Naive thymus-derived CD4-positive, alpha-beta T cell (primary cell): ENCODE measurements at regions of chr15 and their contacts with region 1.

Region 1: GRCh38 chr15:64093627-64094417 is at the start of gene CIAO2A:
- DNase-seq: peak; percentile 66 to 93 (median 87)
- ATAC-seq: peak; percentile 80
- H3K4me3 ChIP-seq: peak within 1 kb of the TSS; percentile 87
- H3K4me3 Mint-ChIP-seq: peak within 1 kb of the TSS; percentile 92 to 100 (median 98)
- H3K27ac ChIP-seq: peak within 1 kb of the TSS; percentile 88
- H3K27ac Mint-ChIP-seq: peak within 1 kb of the TSS; percentile 98 to 100 (median 99)
- H3K4me1 ChIP-seq: peaks cover 41 to 48% of the 10 kb centered on the region in 2 donors
- H3K4me1 Mint-ChIP-seq: peaks cover 50 to 86% (median 81%) of the 10 kb centered on the region in 7 donors
- H3K27me3 ChIP-seq: no peaks in the 10 kb centered on the region
- H3K27me3 Mint-ChIP-seq: no peaks in the 10 kb centered on the region
- total RNA-seq, gene CIAO2A: 19.2 to 66.8 (median 28.0) TPM

Region 2: DNA sequence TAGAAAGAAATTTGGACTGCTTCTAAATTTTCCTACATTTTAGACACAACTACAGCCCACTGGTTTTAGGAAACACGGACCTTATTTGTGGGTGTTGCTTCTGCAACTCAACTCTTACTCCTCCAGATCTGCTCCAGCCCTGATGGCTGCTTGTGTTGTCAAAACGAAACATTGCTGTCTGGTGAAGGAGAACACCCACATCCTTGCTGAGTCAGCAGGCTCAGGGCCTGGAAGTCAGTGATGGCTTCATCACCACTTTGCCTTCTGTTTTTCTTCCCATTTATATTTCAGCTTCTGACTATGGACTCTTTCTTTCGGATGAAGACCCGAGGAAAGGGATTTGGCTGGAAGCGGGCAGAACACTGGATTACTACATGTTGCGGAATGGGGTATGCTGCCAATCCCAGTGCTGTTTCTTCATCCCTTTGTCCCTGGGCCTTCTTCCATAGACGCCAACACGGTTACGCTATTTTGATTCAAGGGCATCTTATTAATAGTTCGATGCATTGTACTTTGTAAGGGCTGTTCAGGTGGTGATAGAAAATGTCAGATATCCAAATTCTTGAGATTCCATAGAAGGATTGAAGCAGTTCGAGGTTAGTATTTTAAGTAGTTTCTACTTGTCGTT is 1443.9 kb before region 1 on chr15:
- CTCF ChIA-PET with region 1: no interaction called
- POLR2A ChIA-PET with region 1: no interaction called
- intact Hi-C with region 1: no loop called
- DNase-seq: peak in 1 of 9 donors; percentile 26
- ATAC-seq: no peak
- H3K4me3 ChIP-seq: no peak overlapping the region
- H3K4me3 Mint-ChIP-seq: no peak overlapping the region
- H3K27ac ChIP-seq: no peak overlapping the region
- H3K27ac Mint-ChIP-seq: no peak overlapping the region
- H3K4me1 ChIP-seq: no peaks in the 10 kb centered on the region
- H3K4me1 Mint-ChIP-seq: peaks cover 0 to 1% (median 0%) of the 10 kb centered on the region in 7 donors
- H3K27me3 ChIP-seq: no peaks in the 10 kb centered on the region
- H3K27me3 Mint-ChIP-seq: peaks cover 0 to 10% (median 0%) of the 10 kb centered on the region in 5 donors

Region 3: GRCh38 chr15:63048115-63048775 is 1045.6 kb before region 1 on chr15:
- CTCF ChIA-PET with region 1: no interaction called
- POLR2A ChIA-PET with region 1: no interaction called
- intact Hi-C with region 1: loop called in 1 of 2 experiments (anchors 10 kb)
- DNase-seq: peak; percentile 72 to 90 (median 85)
- ATAC-seq: peak; percentile 92
- H3K4me3 ChIP-seq: peak overlapping the region; percentile 76
- H3K4me3 Mint-ChIP-seq: peak overlapping the region; percentile 84 to 97 (median 94)
- H3K27ac ChIP-seq: peak overlapping the region; percentile 59
- H3K27ac Mint-ChIP-seq: peak overlapping the region; percentile 25 to 85 (median 68)
- H3K4me1 ChIP-seq: peaks cover 7 to 16% of the 10 kb centered on the region in 2 donors
- H3K4me1 Mint-ChIP-seq: peaks cover 13 to 42% (median 26%) of the 10 kb centered on the region in 7 donors
- H3K27me3 ChIP-seq: peaks cover 17 to 27% of the 10 kb centered on the region in 2 donors
- H3K27me3 Mint-ChIP-seq: peaks cover 30 to 60% (median 36%) of the 10 kb centered on the region in 5 donors

Region 4: GRCh38 chr15:63473999-63474809 is 619.6 kb before region 1 on chr15:
- CTCF ChIA-PET with region 1: interaction called, 5 read pairs
- POLR2A ChIA-PET with region 1: no interaction called
- intact Hi-C with region 1: loop called in 1 of 2 experiments (anchors 1 kb)
- DNase-seq: peak in 5 of 9 donors; percentile 36 to 76 (median 51)
- ATAC-seq: peak; percentile 86
- H3K4me3 ChIP-seq: no peak overlapping the region
- H3K4me3 Mint-ChIP-seq: peak overlapping the region in 8 of 10 donors; percentile 44 to 75 (median 65)
- H3K27ac ChIP-seq: peak overlapping the region; percentile 50
- H3K27ac Mint-ChIP-seq: peak overlapping the region; percentile 86 to 98 (median 94)
- H3K4me1 ChIP-seq: peaks cover 11 to 44% of the 10 kb centered on the region in 2 donors
- H3K4me1 Mint-ChIP-seq: peaks cover 32 to 70% (median 61%) of the 10 kb centered on the region in 7 donors
- H3K27me3 ChIP-seq: no peaks in the 10 kb centered on the region
- H3K27me3 Mint-ChIP-seq: no peaks in the 10 kb centered on the region

Region 5: DNA sequence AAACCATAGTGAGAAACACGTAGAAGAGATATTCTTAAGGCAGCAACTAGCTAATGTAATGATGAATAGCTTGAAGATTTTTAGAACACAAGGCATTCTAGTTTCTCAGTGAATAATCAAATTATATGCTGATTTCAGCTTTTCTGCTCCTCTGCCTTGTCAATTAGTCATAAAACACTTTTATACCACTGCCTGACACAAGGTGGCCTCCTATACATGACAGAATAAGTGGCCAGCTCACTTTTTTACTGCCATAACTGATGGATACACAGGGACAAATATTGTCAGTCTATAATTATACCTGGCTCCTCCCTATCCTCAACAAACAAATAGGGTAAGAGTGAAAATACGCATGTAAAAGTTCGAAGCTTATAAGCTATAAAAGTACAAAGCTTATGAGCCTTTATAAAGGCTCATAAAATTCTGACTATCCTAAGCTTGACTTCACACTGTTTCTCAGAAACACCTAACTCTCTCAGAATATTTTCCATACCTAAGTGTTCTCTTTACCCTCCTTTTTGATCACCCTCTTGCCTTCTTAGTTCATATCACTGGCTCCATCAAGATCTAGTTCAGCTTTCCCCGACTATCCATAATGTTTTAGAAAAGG is 341.6 kb before region 1 on chr15:
- CTCF ChIA-PET with region 1: interaction called, 8 read pairs
- POLR2A ChIA-PET with region 1: interaction called, 4 read pairs
- intact Hi-C with region 1: loop called in 1 of 2 experiments (anchors 1 kb)
- DNase-seq: peak in 7 of 9 donors; percentile 39 to 70 (median 59)
- ATAC-seq: peak; percentile 93
- H3K4me3 ChIP-seq: no peak overlapping the region
- H3K4me3 Mint-ChIP-seq: no peak overlapping the region
- H3K27ac ChIP-seq: no peak overlapping the region
- H3K27ac Mint-ChIP-seq: peak overlapping the region in 7 of 9 donors; percentile 5 to 83 (median 63)
- H3K4me1 ChIP-seq: no peaks in the 10 kb centered on the region
- H3K4me1 Mint-ChIP-seq: peaks cover 0 to 9% (median 2%) of the 10 kb centered on the region in 7 donors
- H3K27me3 ChIP-seq: no peaks in the 10 kb centered on the region
- H3K27me3 Mint-ChIP-seq: no peaks in the 10 kb centered on the region

Region 6: DNA sequence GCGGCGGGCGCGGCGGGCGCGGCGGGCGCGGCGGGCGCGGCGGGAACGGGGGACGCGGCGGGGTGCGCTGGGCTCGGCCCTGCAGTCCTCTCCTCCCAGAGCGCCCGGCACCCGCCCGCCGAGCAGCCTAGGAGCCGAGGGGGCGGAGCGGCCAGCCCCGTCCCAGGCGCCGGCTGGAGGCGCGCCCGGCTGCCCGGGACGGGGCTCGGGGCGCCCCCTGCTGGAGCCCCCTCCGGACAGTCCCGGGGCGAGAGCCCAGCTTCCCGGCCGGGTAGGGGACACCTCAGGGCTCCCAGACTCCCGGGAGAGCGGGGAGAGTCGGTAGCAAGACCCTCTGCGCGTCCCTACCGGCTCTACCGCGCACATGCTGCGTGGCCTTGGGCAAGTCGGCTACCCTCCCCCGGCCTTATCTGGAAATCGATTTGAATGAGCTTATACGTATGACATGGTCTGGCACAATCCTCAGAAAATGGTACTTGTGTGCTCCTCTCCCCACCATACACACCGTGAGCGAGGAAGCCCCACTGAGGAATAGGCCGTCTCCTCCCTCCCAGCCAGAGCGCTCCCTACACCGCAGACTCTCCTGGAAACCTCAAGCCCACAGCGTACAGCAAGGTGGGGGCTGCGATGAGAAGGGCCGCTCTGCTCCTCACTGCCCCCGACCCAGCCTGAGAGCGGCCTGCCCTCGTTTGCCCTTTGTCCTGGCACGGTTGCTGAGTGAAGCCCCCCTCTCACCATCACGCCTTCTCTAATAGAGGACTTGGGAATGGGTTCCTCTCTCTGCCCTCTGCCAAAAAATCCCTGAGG is 47.3 kb before region 1 on chr15 and contains the start of gene DAPK2:
- CTCF ChIA-PET with region 1: no interaction called
- POLR2A ChIA-PET with region 1: no interaction called
- intact Hi-C with region 1: no loop called
- DNase-seq: peak; percentile 29 to 83 (median 63)
- ATAC-seq: peak; percentile 91
- H3K4me3 ChIP-seq: peak within 1 kb of the TSS; percentile 55
- H3K4me3 Mint-ChIP-seq: peak within 1 kb of the TSS; percentile 74 to 85 (median 82)
- H3K27ac ChIP-seq: no peak within 1 kb of the TSS
- H3K27ac Mint-ChIP-seq: peak within 1 kb of the TSS in 5 of 9 donors; percentile 28 to 88 (median 61)
- H3K4me1 ChIP-seq: peaks cover 0 to 5% of the 10 kb centered on the region in 2 donors
- H3K4me1 Mint-ChIP-seq: peaks cover 5 to 30% (median 10%) of the 10 kb centered on the region in 7 donors
- H3K27me3 ChIP-seq: no peaks in the 10 kb centered on the region
- H3K27me3 Mint-ChIP-seq: peaks cover 4 to 41% (median 13%) of the 10 kb centered on the region in 5 donors
- total RNA-seq, gene DAPK2: 0.46 to 9.3 (median 4.2) TPM in 4 of 5 experiments, not detected in the other

Region 7: DNA sequence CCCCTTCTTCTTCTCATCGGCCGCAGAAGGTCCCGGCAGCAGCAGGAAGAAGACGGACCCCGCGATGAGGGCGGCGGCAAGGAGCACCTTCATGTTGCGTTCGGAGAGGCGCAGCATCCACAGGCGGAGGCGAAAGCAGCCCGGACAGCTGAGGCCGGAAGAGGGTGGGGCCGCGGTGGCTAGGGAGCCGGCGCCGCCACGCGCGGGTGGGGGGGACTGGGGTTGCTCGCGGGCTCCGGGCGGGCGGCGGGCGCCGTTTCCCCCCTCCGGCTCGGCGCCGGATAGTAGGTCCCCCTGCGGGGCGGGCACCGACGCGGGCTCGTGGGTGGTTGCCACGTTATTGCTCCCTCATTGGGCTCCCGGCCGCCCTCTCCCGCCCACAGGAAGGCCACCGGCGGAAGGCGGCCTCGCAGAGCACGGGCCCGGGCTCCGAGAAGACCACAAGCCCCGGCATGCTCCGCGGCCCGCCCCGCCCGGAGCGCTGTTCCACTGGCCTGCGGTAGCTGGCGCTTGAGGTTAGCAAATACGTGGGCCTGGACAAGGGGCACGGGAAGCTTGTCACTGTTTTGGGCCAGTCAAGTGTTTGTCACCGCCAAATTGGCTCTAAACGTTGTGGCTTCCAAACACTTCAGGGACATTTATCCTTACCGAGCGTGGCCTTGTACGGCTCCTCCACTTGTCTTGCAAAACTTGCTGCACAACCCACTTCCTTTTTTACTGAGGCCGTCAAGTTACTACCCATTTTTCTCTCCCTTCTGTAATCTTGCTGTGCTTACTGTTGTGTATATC is 69.2 kb after region 1 on chr15 and contains the start of gene PPIB:
- CTCF ChIA-PET with region 1: interaction called, 5 read pairs
- POLR2A ChIA-PET with region 1: interaction called, 12 read pairs
- intact Hi-C with region 1: loop called (anchors 1 kb)
- DNase-seq: peak; percentile 89 to 98 (median 96)
- ATAC-seq: peak; percentile 97
- H3K4me3 ChIP-seq: peak within 1 kb of the TSS; percentile 76
- H3K4me3 Mint-ChIP-seq: peak within 1 kb of the TSS; percentile 80 to 97 (median 90)
- H3K27ac ChIP-seq: peak within 1 kb of the TSS; percentile 97
- H3K27ac Mint-ChIP-seq: peak within 1 kb of the TSS; percentile 83 to 97 (median 93)
- H3K4me1 ChIP-seq: peaks cover 17 to 29% of the 10 kb centered on the region in 2 donors
- H3K4me1 Mint-ChIP-seq: peaks cover 30 to 51% (median 46%) of the 10 kb centered on the region in 7 donors
- H3K27me3 ChIP-seq: no peaks in the 10 kb centered on the region
- H3K27me3 Mint-ChIP-seq: peaks cover 0 to 2% (median 0%) of the 10 kb centered on the region in 5 donors
- total RNA-seq, gene PPIB: 160 to 530 (median 184) TPM

Region 8: DNA sequence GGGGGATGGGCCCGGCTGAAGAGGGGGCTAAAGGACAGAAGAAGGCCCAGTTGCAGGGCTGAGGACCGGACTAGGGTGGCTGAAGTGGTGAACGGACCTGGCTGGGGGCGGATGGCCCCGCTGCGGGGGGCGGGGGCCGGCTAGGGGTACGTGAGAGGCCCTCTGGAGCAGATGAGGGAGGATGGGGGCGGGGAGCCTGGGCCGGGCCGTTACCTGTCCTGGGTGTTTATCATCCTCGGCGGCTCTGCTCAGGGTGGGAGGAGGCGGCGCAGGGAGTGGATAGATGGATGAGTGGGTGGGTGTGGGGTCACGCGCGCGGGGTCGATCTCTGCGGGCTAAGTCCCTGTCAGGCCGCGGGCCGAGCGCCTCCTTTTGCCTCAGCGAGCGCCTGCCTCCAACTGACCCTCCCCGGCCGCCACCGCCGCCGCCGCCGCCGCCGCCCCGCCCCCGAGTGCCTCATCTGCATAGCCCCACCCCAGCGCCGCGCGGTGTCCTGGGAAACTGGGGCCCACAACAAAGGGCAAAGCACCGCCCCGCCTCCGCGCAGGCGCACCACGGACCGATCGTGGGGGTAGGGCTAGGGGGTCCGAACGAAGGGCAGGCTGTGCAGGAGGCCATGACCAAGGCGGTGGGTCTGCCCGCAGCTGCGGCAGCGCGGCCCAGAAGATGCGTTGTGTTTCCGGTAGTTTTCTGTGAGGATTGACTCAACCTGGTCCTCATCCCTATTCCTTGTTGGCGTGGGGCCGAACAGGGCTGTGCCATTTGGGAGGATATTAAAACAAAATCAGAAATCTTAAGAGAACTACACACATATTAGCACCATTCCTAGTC is 609.2 kb after region 1 on chr15:
- CTCF ChIA-PET with region 1: no interaction called
- POLR2A ChIA-PET with region 1: no interaction called
- intact Hi-C with region 1: loop called in 1 of 2 experiments (anchors 1 kb)
- DNase-seq: peak; percentile 87 to 98 (median 92)
- ATAC-seq: peak; percentile 98
- H3K4me3 ChIP-seq: peak overlapping the region; percentile 93
- H3K4me3 Mint-ChIP-seq: peak overlapping the region; percentile 78 to 97 (median 84)
- H3K27ac ChIP-seq: peak overlapping the region; percentile 80
- H3K27ac Mint-ChIP-seq: peak overlapping the region; percentile 67 to 95 (median 91)
- H3K4me1 ChIP-seq: peaks cover 40 to 43% of the 10 kb centered on the region in 2 donors
- H3K4me1 Mint-ChIP-seq: peaks cover 46 to 57% (median 52%) of the 10 kb centered on the region in 7 donors
- H3K27me3 ChIP-seq: no peaks in the 10 kb centered on the region
- H3K27me3 Mint-ChIP-seq: no peaks in the 10 kb centered on the region

Region 9: GRCh38 chr15:65133548-65134200 is 1039.9 kb after region 1 on chr15 and contains the start of gene PDCD7:
- CTCF ChIA-PET with region 1: no interaction called
- POLR2A ChIA-PET with region 1: interaction called, 3 read pairs
- intact Hi-C with region 1: loop called in 1 of 2 experiments (anchors 10 kb)
- DNase-seq: peak; percentile 52 to 89 (median 81)
- ATAC-seq: peak; percentile 95
- H3K4me3 ChIP-seq: peak within 1 kb of the TSS; percentile 81
- H3K4me3 Mint-ChIP-seq: peak within 1 kb of the TSS; percentile 88 to 100 (median 92)
- H3K27ac ChIP-seq: peak within 1 kb of the TSS; percentile 94
- H3K27ac Mint-ChIP-seq: peak within 1 kb of the TSS; percentile 90 to 98 (median 96)
- H3K4me1 ChIP-seq: peaks cover 6 to 14% of the 10 kb centered on the region in 2 donors
- H3K4me1 Mint-ChIP-seq: peaks cover 20 to 43% (median 35%) of the 10 kb centered on the region in 7 donors
- H3K27me3 ChIP-seq: no peaks in the 10 kb centered on the region
- H3K27me3 Mint-ChIP-seq: peaks cover 0 to 2% (median 0%) of the 10 kb centered on the region in 5 donors
- total RNA-seq, gene PDCD7: 23.0 to 38.6 (median 36.9) TPM